ENCODE measurements at regions of chrX and their contacts with region 1.

Region 1: DNA sequence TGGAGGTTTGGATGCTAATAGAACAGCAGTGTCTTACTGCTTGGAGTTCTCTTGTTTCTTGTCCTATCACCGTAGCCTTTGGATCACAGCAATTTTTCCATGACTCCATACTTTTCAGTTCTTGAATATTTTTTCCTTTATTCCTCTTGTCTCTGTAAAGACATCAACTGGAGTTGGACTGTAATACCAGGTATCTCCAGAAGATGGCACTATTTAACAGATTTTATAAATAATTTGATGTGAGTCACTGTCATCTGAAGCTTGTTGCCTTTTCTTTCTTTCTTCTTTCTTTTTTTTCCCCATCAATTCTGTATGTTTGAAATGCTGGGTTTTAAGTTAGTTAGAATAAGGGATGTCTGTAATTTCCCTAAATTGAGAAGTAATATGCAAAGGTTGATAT is 24.1 kb downstream of the HPRT1 start:
- DNase-seq: no peak
- ATAC-seq: no peak
- H3K4me3 ChIP-seq: no peak overlapping the region
- H3K27ac ChIP-seq: no peak overlapping the region
- H3K4me1 ChIP-seq: no peaks in the 10 kb centered on the region
- H3K27me3 ChIP-seq: no peaks in the 10 kb centered on the region
- CTCF ChIP-seq: peak; percentile 29 to 73 (median 61)

Region 2: GRCh38 chrX:134210465-134210864 is 273.6 kb before region 1 on chrX:
- intact Hi-C with region 1: no loop called
- DNase-seq: no peak
- ATAC-seq: no peak
- H3K4me3 ChIP-seq: no peak overlapping the region
- H3K27ac ChIP-seq: no peak overlapping the region
- H3K4me1 ChIP-seq: no peaks in the 10 kb centered on the region
- H3K27me3 ChIP-seq: peaks cover 0 to 7% (median 0%) of the 10 kb centered on the region in 7 donors
- CTCF ChIP-seq: no peak

Region 3: GRCh38 chrX:134443020-134443419 is 41.0 kb before region 1 on chrX:
- intact Hi-C with region 1: no loop called
- DNase-seq: no peak
- ATAC-seq: no peak
- H3K4me3 ChIP-seq: no peak overlapping the region
- H3K27ac ChIP-seq: no peak overlapping the region
- H3K4me1 ChIP-seq: no peaks in the 10 kb centered on the region
- H3K27me3 ChIP-seq: no peaks in the 10 kb centered on the region
- CTCF ChIP-seq: no peak

Region 4: GRCh38 chrX:134782796-134783195 is 298.8 kb after region 1 on chrX:
- intact Hi-C with region 1: loop called in 4 of 10 experiments (anchors 5 to 10 kb)
- DNase-seq: no peak
- ATAC-seq: no peak
- H3K4me3 ChIP-seq: no peak overlapping the region
- H3K27ac ChIP-seq: no peak overlapping the region
- H3K4me1 ChIP-seq: no peaks in the 10 kb centered on the region
- H3K27me3 ChIP-seq: peaks cover 0 to 21% (median 0%) of the 10 kb centered on the region in 7 donors
- CTCF ChIP-seq: peak; percentile 21 to 68 (median 55)

Region 5: GRCh38 chrX:135086197-135086854 is 602.3 kb after region 1 on chrX:
- intact Hi-C with region 1: loop called in 1 of 10 experiments (anchors 10 kb)
- DNase-seq: peak in 1 of 2 donors; percentile 16
- ATAC-seq: peak in 5 of 8 donors; percentile 46 to 70 (median 54)
- H3K4me3 ChIP-seq: no peak overlapping the region
- H3K27ac ChIP-seq: no peak overlapping the region
- H3K4me1 ChIP-seq: no peaks in the 10 kb centered on the region
- H3K27me3 ChIP-seq: peaks cover 0 to 44% (median 0%) of the 10 kb centered on the region in 7 donors
- CTCF ChIP-seq: peak; percentile 25 to 70 (median 60)